ENCODE measurements at regions of chr11 and their contacts with region 1.

Region 1: GRCh38 chr11:65615229-65615941 is at the start of gene PCNX3:
- DNase-seq: peak; percentile 100
- ATAC-seq: peak; percentile 88
- H3K4me3 ChIP-seq: peak within 1 kb of the TSS; percentile 64 to 93 (median 88)
- H3K4me3 Mint-ChIP-seq: peak within 1 kb of the TSS; percentile 98
- H3K27ac ChIP-seq: peak within 1 kb of the TSS; percentile 85 to 89
- H3K27ac Mint-ChIP-seq: peak within 1 kb of the TSS; percentile 97
- H3K4me1 ChIP-seq: peaks cover 39 to 47% of the 10 kb centered on the region in 2 donors
- H3K4me1 Mint-ChIP-seq: peaks cover 49% of the 10 kb centered on the region
- H3K27me3 ChIP-seq: no peaks in the 10 kb centered on the region
- H3K27me3 Mint-ChIP-seq: no peaks in the 10 kb centered on the region
- CTCF ChIP-seq: no peak
- total RNA-seq, gene PCNX3: 61.4 and 61.5 TPM in 2 replicates

Region 2: DNA sequence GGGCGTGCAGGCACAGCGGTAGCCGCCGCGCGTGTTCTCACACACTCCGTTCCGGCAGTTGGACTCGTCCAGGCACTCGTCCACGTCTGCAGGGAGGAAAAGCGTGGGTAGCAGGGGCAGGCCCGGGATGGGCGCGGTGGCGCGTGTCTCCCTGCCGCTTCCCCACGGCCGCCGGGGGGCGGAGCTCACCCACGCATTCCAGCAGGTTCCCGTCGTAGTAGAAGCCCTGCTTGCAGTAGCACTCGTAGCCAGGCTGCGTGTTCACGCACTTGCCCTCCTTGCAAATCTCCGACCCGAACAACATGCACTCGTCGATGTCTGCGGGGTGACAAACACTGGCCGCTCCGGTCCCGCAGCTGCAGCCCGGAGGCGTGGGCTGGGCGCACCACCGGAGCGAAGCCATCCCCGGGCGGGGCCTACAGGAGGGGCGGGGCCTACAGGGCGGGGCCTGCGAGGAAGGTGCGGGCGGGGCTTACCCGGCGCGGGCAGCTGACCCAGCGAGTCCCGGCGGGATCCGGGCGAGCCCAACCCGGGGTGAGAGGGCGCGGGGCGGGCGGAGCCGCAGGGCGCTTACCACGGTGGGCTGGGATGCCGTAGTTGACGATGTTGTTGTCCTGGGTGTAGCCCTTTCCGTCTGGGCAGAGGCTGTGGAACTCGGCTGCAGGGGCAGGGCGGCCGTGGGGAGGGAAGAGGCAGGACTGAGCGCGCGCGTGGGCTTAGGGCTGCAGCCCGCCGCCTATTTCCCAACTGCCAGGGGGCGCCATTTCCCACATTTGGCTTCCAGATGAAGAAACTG is 74.9 kb before region 1 on chr11:
- CTCF ChIA-PET with region 1: interaction called, 21 read pairs
- POLR2A ChIA-PET with region 1: interaction called, 17 read pairs
- intact Hi-C with region 1: loop called (anchors 1 kb)
- DNase-seq: peak; percentile 97
- ATAC-seq: peak; percentile 87
- H3K4me3 ChIP-seq: peak overlapping the region; percentile 74 to 97 (median 86)
- H3K4me3 Mint-ChIP-seq: peak overlapping the region; percentile 95
- H3K27ac ChIP-seq: peak overlapping the region; percentile 85 to 87
- H3K27ac Mint-ChIP-seq: peak overlapping the region; percentile 96
- H3K4me1 ChIP-seq: peaks cover 12 to 17% of the 10 kb centered on the region in 2 donors
- H3K4me1 Mint-ChIP-seq: peaks cover 24% of the 10 kb centered on the region
- H3K27me3 ChIP-seq: no peaks in the 10 kb centered on the region
- H3K27me3 Mint-ChIP-seq: no peaks in the 10 kb centered on the region
- CTCF ChIP-seq: peak; percentile 63

Region 3: GRCh38 chr11:65588199-65589054 is 27.0 kb before region 1 on chr11:
- CTCF ChIA-PET with region 1: interaction called, 20 read pairs
- POLR2A ChIA-PET with region 1: interaction called, 7 read pairs
- intact Hi-C with region 1: loop called (anchors 1 kb)
- DNase-seq: peak; percentile 87
- ATAC-seq: peak; percentile 76
- H3K4me3 ChIP-seq: peak overlapping the region in 3 of 5 experiments; percentile 9 to 26 (median 13)
- H3K4me3 Mint-ChIP-seq: peak overlapping the region; percentile 75
- H3K27ac ChIP-seq: peak overlapping the region; percentile 82 to 92
- H3K27ac Mint-ChIP-seq: peak overlapping the region; percentile 93
- H3K4me1 ChIP-seq: peaks cover 27 to 41% of the 10 kb centered on the region in 2 donors
- H3K4me1 Mint-ChIP-seq: peaks cover 38% of the 10 kb centered on the region
- H3K27me3 ChIP-seq: no peaks in the 10 kb centered on the region
- H3K27me3 Mint-ChIP-seq: no peaks in the 10 kb centered on the region
- CTCF ChIP-seq: peak; percentile 83

Region 4: GRCh38 chr11:65637794-65638317 is 22.5 kb after region 1 on chr11 and contains the start of gene SIPA1:
- CTCF ChIA-PET with region 1: no interaction called
- POLR2A ChIA-PET with region 1: interaction called, 28 read pairs
- intact Hi-C with region 1: loop called (anchors 1 kb)
- DNase-seq: peak; percentile 88
- ATAC-seq: peak; percentile 32
- H3K4me3 ChIP-seq: peak within 1 kb of the TSS; percentile 70 to 97 (median 93)
- H3K4me3 Mint-ChIP-seq: peak within 1 kb of the TSS; percentile 99
- H3K27ac ChIP-seq: peak within 1 kb of the TSS; percentile 100
- H3K27ac Mint-ChIP-seq: peak within 1 kb of the TSS; percentile 98
- H3K4me1 ChIP-seq: peaks cover 37 to 66% of the 10 kb centered on the region in 2 donors
- H3K4me1 Mint-ChIP-seq: peaks cover 42% of the 10 kb centered on the region
- H3K27me3 ChIP-seq: no peaks in the 10 kb centered on the region
- H3K27me3 Mint-ChIP-seq: no peaks in the 10 kb centered on the region
- CTCF ChIP-seq: no peak
- total RNA-seq, gene SIPA1: 448 and 461 TPM in 2 replicates

Region 5: GRCh38 chr11:65711785-65712632 is 96.6 kb after region 1 on chr11 and contains the start of gene KAT5:
- CTCF ChIA-PET with region 1: interaction called, 7 read pairs
- POLR2A ChIA-PET with region 1: interaction called, 6 read pairs
- intact Hi-C with region 1: loop called (anchors 2 kb)
- DNase-seq: peak; percentile 100
- ATAC-seq: peak; percentile 82
- H3K4me3 ChIP-seq: peak within 1 kb of the TSS; percentile 41 to 94 (median 84)
- H3K4me3 Mint-ChIP-seq: peak within 1 kb of the TSS; percentile 92
- H3K27ac ChIP-seq: peak within 1 kb of the TSS; percentile 98 to 99
- H3K27ac Mint-ChIP-seq: peak within 1 kb of the TSS; percentile 99
- H3K4me1 ChIP-seq: peaks cover 10 to 17% of the 10 kb centered on the region in 2 donors
- H3K4me1 Mint-ChIP-seq: peaks cover 27% of the 10 kb centered on the region
- H3K27me3 ChIP-seq: no peaks in the 10 kb centered on the region
- H3K27me3 Mint-ChIP-seq: no peaks in the 10 kb centered on the region
- CTCF ChIP-seq: peak; percentile 98
- total RNA-seq, gene KAT5: 134 and 142 TPM in 2 replicates

Region 6: GRCh38 chr11:65726660-65727059 is 111.3 kb after region 1 on chr11:
- CTCF ChIA-PET with region 1: no interaction called
- POLR2A ChIA-PET with region 1: no interaction called
- intact Hi-C with region 1: no loop called
- DNase-seq: no peak
- ATAC-seq: no peak
- H3K4me3 ChIP-seq: no peak overlapping the region
- H3K4me3 Mint-ChIP-seq: no peak overlapping the region
- H3K27ac ChIP-seq: no peak overlapping the region
- H3K27ac Mint-ChIP-seq: no peak overlapping the region
- H3K4me1 ChIP-seq: no peaks in the 10 kb centered on the region
- H3K4me1 Mint-ChIP-seq: no peaks in the 10 kb centered on the region
- H3K27me3 ChIP-seq: peaks cover 0 to 5% (median 1%) of the 10 kb centered on the region in 4 experiments
- H3K27me3 Mint-ChIP-seq: peaks cover 10% of the 10 kb centered on the region
- CTCF ChIP-seq: no peak

Region 7: GRCh38 chr11:65988791-65989592 is 373.6 kb after region 1 on chr11:
- CTCF ChIA-PET with region 1: no interaction called
- POLR2A ChIA-PET with region 1: no interaction called
- intact Hi-C with region 1: loop called (anchors 1 kb)
- DNase-seq: peak; percentile 96
- ATAC-seq: peak; percentile 99
- H3K4me3 ChIP-seq: no peak overlapping the region
- H3K4me3 Mint-ChIP-seq: no peak overlapping the region
- H3K27ac ChIP-seq: no peak overlapping the region
- H3K27ac Mint-ChIP-seq: peak overlapping the region; percentile 84
- H3K4me1 ChIP-seq: peaks cover 3 to 7% of the 10 kb centered on the region in 2 donors
- H3K4me1 Mint-ChIP-seq: peaks cover 5% of the 10 kb centered on the region
- H3K27me3 ChIP-seq: no peaks in the 10 kb centered on the region
- H3K27me3 Mint-ChIP-seq: no peaks in the 10 kb centered on the region
- CTCF ChIP-seq: peak; percentile 99

Measured in B cell (primary cell).